SK-N-SH (cell line): ENCODE measurements at regions of chr1 and their contacts with region 1.

Region 1: DNA sequence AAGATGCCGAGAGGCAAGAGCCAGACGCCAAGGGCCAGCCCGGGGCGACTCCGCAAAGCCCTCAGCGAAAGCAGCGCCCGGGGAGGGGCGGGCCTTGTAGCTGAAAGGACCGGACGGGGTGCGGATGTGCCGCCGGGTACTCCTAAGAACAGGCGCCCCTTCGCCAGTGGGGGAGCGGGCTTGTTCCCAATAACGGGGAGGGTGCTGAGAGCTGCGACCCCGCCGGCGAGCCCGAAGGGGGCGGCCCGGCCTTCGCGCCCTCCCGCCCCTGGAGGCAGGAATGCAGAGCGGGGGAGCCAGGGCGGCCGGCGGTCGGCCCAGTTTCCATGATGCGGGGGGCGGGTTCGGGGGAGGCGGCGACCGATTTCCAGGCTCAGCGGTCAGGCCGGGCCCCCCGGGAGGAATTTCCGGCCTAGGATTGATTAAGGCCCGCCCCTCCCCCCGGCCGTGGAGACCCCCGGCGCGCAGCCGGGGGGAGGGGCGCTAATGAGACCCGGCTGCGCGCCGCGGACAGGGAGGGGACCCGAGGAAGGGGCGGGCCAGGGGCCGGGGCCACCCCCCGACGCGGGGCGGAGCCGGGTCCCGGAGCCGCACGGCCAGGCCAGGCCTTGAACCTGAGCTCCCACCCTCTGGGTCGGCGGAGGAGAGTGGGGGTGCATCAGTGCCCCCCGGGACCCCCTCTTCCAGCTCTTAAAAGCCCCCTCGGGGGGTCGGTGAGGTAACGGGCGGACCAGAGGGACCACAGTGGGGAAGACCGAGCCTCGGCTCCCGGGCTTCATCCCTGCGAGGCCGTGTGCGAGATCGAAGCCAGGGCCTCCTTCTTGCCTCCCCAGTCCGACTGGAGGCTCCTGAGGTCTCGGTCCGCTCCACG is 898 bp upstream of the TMEM200B start:
- DNase-seq: peak; percentile 96
- H3K4me3 ChIP-seq: peak overlapping the region; percentile 69 to 71
- H3K27ac ChIP-seq: peak overlapping the region; percentile 43 to 55; a peak in 3 of 4 replicates
- H3K4me1 ChIP-seq: peaks cover 0 to 9% of the 10 kb centered on the region in 2 experiments; a peak in 1 of 4 replicates
- H3K27me3 ChIP-seq: no peaks in the 10 kb centered on the region
- CTCF ChIP-seq: peak; percentile 71
- EP300 ChIP-seq: no peak
- RAD21 ChIP-seq: no peak

Region 2: DNA sequence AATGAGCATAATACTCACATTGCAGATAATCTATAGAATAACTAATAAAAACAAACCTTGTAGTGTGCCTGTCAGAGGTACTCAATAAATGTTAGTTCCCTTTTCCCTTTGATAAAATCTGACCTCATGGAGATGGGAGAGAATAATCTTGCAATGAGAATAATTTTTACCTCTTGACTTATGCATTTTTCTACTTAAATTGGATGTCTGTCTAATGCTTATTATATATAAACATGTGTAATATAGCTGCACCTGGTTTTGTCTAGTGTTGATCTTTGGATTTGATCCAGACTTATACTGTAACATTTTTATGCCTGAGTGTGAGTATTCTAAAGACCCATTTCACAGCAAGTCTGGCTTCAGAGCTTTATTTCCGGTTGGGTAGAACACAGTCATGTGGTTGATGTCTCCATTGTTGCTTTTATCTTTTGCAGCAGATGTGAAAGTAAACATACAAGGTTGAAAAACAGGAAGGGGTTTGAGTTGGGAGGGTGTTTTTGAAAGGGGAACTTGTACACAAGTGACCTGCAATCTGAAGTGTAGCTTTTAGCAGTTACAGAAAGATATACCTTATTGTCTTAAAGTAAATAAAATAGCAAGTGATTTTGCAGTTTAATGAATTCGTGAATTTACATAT is 197.9 kb before region 1 on chr1:
- CTCF ChIA-PET with region 1: no interaction called
- POLR2A ChIA-PET with region 1: no interaction called
- DNase-seq: no peak
- H3K4me3 ChIP-seq: no peak overlapping the region
- H3K27ac ChIP-seq: peak overlapping the region in 1 of 2 experiments; percentile 11; a peak in 2 of 4 replicates
- H3K4me1 ChIP-seq: peaks cover 7 to 20% of the 10 kb centered on the region in 2 experiments; a peak in 2 of 4 replicates
- H3K27me3 ChIP-seq: no peaks in the 10 kb centered on the region
- CTCF ChIP-seq: no peak
- EP300 ChIP-seq: no peak
- RAD21 ChIP-seq: no peak

Region 3: GRCh38 chr1:29105839-29106238 is 18.8 kb before region 1 on chr1:
- CTCF ChIA-PET with region 1: interaction called, 20 read pairs
- POLR2A ChIA-PET with region 1: no interaction called
- DNase-seq: no peak
- H3K4me3 ChIP-seq: no peak overlapping the region
- H3K27ac ChIP-seq: no peak overlapping the region
- H3K4me1 ChIP-seq: no peaks in the 10 kb centered on the region
- H3K27me3 ChIP-seq: no peaks in the 10 kb centered on the region
- CTCF ChIP-seq: no peak
- EP300 ChIP-seq: no peak
- RAD21 ChIP-seq: no peak

Region 4: DNA sequence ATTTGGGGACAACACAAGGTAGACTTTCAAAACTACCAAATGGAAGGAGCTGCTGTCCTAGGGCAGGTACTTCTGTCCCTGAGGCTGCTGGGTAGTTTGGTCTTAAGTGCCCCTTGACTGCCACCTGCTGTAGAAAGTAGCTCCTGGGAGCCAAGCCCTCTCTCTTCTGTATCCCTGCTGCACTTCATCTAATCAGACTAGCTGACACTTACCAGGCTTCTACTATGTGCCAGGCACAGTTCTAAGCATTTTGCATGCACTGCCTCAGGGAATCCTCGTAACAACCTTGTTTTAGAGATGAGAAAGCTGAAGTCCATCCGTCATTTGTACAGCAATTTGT is 73.0 kb after region 1 on chr1:
- CTCF ChIA-PET with region 1: interaction called, 14 read pairs
- POLR2A ChIA-PET with region 1: no interaction called
- DNase-seq: peak; percentile 61
- H3K4me3 ChIP-seq: no peak overlapping the region
- H3K27ac ChIP-seq: peak overlapping the region in 1 of 2 experiments; percentile 71; a peak in 2 of 4 replicates
- H3K4me1 ChIP-seq: peaks cover 16 to 18% of the 10 kb centered on the region in 2 experiments; a peak in 2 of 4 replicates
- H3K27me3 ChIP-seq: no peaks in the 10 kb centered on the region
- CTCF ChIP-seq: peak; percentile 57
- EP300 ChIP-seq: no peak
- RAD21 ChIP-seq: peak; percentile 58

Region 5: GRCh38 chr1:29202584-29203340 is 78.2 kb after region 1 on chr1:
- CTCF ChIA-PET with region 1: interaction called, 14 read pairs
- POLR2A ChIA-PET with region 1: no interaction called
- DNase-seq: peak; percentile 90
- H3K4me3 ChIP-seq: no peak overlapping the region; a peak in 1 of 4 replicates
- H3K27ac ChIP-seq: peak overlapping the region; percentile 62 to 83
- H3K4me1 ChIP-seq: peaks cover 9 to 12% of the 10 kb centered on the region in 2 experiments; a peak in 2 of 4 replicates
- H3K27me3 ChIP-seq: no peaks in the 10 kb centered on the region
- CTCF ChIP-seq: peak; percentile 98
- EP300 ChIP-seq: peak in 1 of 2 experiments; percentile 21; a peak in 1 of 4 replicates
- RAD21 ChIP-seq: peak; percentile 97

Region 6: GRCh38 chr1:29282924-29283811 is 158.6 kb after region 1 on chr1:
- CTCF ChIA-PET with region 1: no interaction called
- POLR2A ChIA-PET with region 1: no interaction called
- DNase-seq: peak; percentile 73
- H3K4me3 ChIP-seq: no peak overlapping the region
- H3K27ac ChIP-seq: no peak overlapping the region; a peak in 1 of 4 replicates
- H3K4me1 ChIP-seq: peaks cover 0 to 23% of the 10 kb centered on the region in 2 experiments; a peak in 2 of 4 replicates
- H3K27me3 ChIP-seq: no peaks in the 10 kb centered on the region
- CTCF ChIP-seq: no peak
- EP300 ChIP-seq: no peak
- RAD21 ChIP-seq: no peak